OCI-LY7 (cell line): ENCODE measurements at regions of chr11 and their contacts with region 1.

Region 1: DNA sequence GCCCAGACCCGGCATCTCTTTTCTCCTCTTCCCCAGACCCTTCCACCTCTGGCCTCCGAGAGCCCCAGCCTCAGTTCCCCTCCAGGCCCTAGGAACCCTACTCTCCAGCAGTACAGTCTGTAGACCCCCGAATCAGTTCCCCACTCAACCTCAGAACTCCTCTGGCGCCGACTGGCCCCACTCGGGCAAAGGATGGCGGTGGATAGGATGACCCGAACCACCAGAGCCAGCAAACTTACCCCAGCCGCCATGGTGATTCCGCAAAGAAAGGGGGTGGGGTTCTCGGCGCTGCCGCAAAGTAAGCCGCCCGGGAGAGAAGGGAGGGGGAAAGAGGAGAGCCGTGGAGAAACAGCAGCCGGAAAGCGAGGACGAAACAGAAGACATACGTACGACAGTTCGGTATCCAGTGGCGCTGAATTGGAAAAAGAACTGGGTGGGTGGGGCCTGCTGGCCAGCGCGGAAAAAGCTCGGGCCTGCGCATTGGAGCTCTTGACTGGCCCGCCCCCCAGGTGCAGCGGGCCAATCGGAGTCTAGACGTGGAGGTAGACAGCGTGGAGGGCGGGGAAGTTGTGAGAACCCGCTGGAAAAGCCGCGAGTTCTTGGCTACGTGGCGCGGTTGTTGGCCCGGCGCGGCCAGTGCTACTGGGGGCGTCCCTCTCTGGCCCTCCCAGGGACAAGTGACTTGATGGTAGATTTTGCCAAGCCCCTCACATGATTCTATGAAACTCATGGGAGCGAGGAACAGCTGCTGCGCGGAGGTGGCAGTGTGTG is at the start of gene EEF1G:
- DNase-seq: peak; percentile 99
- H3K4me3 ChIP-seq: peak within 1 kb of the TSS; percentile 87
- H3K27ac ChIP-seq: peak within 1 kb of the TSS; percentile 62
- H3K4me1 ChIP-seq: peaks cover 35% of the 10 kb centered on the region
- CTCF ChIP-seq: no peak
- total RNA-seq, gene EEF1G: 2,328 and 2,651 TPM in 2 replicates

Region 2: DNA sequence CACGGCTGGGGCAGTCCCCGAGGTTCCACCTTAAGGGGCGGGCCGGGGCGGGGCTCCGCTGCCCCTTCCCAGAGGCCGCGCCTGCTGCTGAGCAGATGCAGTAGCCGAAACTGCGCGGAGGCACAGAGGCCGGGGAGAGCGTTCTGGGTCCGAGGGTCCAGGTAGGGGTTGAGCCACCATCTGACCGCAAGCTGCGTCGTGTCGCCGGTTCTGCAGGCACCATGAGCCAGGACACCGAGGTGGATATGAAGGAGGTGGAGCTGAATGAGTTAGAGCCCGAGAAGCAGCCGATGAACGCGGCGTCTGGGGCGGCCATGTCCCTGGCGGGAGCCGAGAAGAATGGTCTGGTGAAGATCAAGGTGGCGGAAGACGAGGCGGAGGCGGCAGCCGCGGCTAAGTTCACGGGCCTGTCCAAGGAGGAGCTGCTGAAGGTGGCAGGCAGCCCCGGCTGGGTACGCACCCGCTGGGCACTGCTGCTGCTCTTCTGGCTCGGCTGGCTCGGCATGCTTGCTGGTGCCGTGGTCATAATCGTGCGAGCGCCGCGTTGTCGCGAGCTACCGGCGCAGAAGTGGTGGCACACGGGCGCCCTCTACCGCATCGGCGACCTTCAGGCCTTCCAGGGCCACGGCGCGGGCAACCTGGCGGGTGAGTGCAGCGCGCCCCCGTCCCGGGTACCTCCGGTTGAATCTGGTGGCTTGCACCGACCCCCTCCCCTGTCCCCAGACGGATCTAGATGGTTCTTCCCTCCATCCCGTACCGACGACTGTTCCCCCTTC is 307.2 kb after region 1 on chr11 and contains the start of gene SLC3A2:
- CTCF ChIA-PET with region 1: no interaction called
- POLR2A ChIA-PET with region 1: no interaction called
- intact Hi-C with region 1: loop called (anchors 5 kb)
- DNase-seq: peak; percentile 89
- H3K4me3 ChIP-seq: peak within 1 kb of the TSS; percentile 73
- H3K27ac ChIP-seq: peak within 1 kb of the TSS; percentile 74
- H3K4me1 ChIP-seq: peaks cover 28% of the 10 kb centered on the region
- CTCF ChIP-seq: peak; percentile 78
- total RNA-seq, gene SLC3A2: 289 and 291 TPM in 2 replicates